K562 (cell line): ENCODE measurements at regions of chr11 and their contacts with region 1.

Region 1: DNA sequence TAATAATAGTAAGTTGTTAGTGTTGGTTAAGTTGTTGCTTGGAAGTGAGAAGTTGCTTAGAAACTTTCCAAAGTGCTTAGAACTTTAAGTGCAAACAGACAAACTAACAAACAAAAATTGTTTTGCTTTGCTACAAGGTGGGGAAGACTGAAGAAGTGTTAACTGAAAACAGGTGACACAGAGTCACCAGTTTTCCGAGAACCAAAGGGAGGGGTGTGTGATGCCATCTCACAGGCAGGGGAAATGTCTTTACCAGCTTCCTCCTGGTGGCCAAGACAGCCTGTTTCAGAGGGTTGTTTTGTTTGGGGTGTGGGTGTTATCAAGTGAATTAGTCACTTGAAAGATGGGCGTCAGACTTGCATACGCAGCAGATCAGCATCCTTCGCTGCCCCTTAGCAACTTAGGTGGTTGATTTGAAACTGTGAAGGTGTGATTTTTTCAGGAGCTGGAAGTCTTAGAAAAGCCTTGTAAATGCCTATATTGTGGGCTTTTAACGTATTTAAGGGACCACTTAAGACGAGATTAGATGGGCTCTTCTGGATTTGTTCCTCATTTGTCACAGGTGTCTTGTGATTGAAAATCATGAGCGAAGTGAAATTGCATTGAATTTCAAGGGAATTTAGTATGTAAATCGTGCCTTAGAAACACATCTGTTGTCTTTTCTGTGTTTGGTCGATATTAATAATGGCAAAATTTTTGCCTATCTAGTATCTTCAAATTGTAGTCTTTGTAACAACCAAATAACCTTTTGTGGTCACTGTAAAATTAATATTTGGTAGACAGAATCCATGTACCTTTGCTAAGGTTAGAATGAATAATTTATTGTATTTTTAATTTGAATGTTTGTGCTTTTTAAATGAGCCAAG is 2.7 kb downstream of the NEAT1 start:
- DNase-seq: peak in 2 of 4 experiments; percentile 29 to 74
- ATAC-seq: no peak
- H3K4me3 ChIP-seq: peak overlapping the region; percentile 79
- H3K27ac ChIP-seq: peak overlapping the region; percentile 98
- H3K4me1 ChIP-seq: peaks cover 22 to 36% of the 10 kb centered on the region in 2 experiments
- H3K27me3 ChIP-seq: no peaks in the 10 kb centered on the region
- CTCF ChIP-seq: 0 out of 6 replicates have a peak, but pooled peaks of 1 of the 3 experiments have one; percentile 16
- EP300 ChIP-seq: no peak
- POLR2A ChIP-seq: peak; percentile 73
- RAD21 ChIP-seq: no peak; a peak in 1 of 4 replicates

Region 2: DNA sequence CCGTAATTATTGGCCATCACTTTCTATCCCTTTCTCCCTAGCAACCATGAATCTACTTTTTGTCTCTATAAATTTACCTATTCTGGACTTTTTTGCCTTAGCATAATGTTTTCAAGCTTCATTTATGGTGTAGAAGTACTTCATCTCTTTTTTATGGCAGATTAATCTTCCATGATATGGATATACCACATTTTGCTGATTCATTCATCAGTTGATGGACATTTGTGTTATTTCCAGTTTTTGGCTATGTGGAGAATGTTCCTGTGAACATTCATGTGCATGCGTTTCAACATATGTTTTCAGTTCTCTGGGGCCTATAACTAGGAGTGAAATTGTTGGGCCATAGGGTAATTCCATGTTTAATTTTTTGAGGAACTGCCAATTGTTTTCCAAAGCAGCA is 230.8 kb before region 1 on chr11:
- CTCF ChIA-PET with region 1: no interaction called
- POLR2A ChIA-PET with region 1: no interaction called
- in situ Hi-C with region 1: no loop called
- intact Hi-C with region 1: no loop called
- DNase-seq: no peak
- ATAC-seq: no peak
- H3K4me3 ChIP-seq: no peak overlapping the region
- H3K27ac ChIP-seq: no peak overlapping the region
- H3K4me1 ChIP-seq: no peaks in the 10 kb centered on the region
- H3K27me3 ChIP-seq: no peaks in the 10 kb centered on the region
- CTCF ChIP-seq: no peak
- EP300 ChIP-seq: no peak
- POLR2A ChIP-seq: no peak
- RAD21 ChIP-seq: no peak

Region 3: GRCh38 chr11:65440831-65441499 is 15.6 kb after region 1 on chr11:
- CTCF ChIA-PET with region 1: no interaction called
- POLR2A ChIA-PET with region 1: interaction called, 93 read pairs
- in situ Hi-C with region 1: no loop called
- intact Hi-C with region 1: no loop called
- DNase-seq: peak in 1 of 4 experiments; percentile 20
- ATAC-seq: no peak
- H3K4me3 ChIP-seq: no peak overlapping the region
- H3K27ac ChIP-seq: no peak overlapping the region
- H3K4me1 ChIP-seq: peaks cover 12 to 45% of the 10 kb centered on the region in 2 experiments; a peak in 4 of 5 replicates
- H3K27me3 ChIP-seq: no peaks in the 10 kb centered on the region
- CTCF ChIP-seq: no peak
- EP300 ChIP-seq: no peak
- POLR2A ChIP-seq: peak; percentile 61
- RAD21 ChIP-seq: no peak